ENCODE measurements at regions of chr5 and their contacts with region 1.

Region 1: DNA sequence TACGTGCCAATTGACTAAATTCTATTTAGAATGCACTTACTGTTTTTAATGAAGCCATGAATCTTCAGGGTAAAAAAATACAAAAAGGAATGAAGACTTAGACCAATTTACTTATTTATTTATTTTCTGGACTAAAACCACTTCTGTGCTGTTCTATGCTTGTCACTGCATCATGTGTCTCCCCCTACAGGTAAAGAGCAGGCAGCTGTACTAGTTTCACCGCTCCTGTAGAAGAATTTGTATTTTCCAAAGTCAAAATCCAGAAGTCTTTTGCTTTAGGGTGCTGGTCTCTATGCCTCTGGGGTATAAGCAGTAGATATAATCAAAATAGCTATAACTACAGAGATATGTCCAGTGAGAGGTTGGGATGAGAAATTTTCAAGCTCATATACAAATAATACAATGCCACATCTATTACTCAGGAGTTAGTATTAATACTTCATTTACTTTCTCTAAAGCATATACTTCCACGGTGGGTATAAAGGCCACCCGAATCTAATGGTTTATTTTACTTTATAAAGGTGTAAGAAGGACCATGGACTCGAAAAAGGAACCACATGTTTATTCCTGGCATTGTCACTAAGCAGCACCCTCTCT is 591.5 kb downstream of the RAB3C start:
- DNase-seq: no peak
- H3K4me3 ChIP-seq: no peak overlapping the region
- H3K27me3 ChIP-seq: no peaks in the 10 kb centered on the region
- CTCF ChIP-seq: peak; percentile 89

Region 2: GRCh38 chr5:59034498-59035186 is 139.7 kb before region 1 on chr5:
- CTCF ChIA-PET with region 1: interaction called, 84 read pairs
- POLR2A ChIA-PET with region 1: no interaction called
- DNase-seq: no peak
- H3K4me3 ChIP-seq: no peak overlapping the region
- H3K27me3 ChIP-seq: no peaks in the 10 kb centered on the region
- CTCF ChIP-seq: peak; percentile 81

Region 3: DNA sequence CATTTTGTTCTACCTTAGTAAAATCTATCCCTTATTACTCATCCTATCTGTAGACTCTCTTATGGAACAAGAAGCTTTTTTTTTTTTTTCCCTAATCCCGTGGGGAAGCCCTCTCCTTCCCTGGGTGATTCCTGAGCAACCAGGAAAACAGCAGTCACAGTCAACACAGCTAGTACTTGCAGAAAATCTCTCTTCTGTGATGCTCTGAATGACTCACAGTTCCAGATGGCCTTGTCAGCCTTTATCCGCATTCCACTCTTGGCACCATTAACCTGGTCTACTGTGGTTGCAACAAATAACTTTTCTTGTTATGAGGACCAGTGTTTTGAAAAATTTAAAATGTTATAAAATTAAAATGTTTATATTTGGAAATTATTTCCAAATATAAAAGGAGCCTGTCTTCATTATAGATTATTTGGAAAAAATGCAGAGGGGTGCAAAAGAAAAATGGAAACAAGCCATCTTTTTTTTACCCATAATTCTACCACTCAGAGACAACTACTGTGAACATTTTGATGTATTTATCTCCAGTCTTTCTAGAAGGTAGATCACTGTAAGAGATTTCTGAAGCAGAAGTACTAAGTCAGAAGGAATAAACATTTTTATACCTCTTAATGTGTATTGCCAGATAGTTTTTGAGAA is 104.8 kb before region 1 on chr5:
- CTCF ChIA-PET with region 1: no interaction called
- POLR2A ChIA-PET with region 1: no interaction called
- DNase-seq: peak; percentile 79
- H3K4me3 ChIP-seq: no peak overlapping the region
- H3K27me3 ChIP-seq: no peaks in the 10 kb centered on the region
- CTCF ChIP-seq: no peak

Region 4: DNA sequence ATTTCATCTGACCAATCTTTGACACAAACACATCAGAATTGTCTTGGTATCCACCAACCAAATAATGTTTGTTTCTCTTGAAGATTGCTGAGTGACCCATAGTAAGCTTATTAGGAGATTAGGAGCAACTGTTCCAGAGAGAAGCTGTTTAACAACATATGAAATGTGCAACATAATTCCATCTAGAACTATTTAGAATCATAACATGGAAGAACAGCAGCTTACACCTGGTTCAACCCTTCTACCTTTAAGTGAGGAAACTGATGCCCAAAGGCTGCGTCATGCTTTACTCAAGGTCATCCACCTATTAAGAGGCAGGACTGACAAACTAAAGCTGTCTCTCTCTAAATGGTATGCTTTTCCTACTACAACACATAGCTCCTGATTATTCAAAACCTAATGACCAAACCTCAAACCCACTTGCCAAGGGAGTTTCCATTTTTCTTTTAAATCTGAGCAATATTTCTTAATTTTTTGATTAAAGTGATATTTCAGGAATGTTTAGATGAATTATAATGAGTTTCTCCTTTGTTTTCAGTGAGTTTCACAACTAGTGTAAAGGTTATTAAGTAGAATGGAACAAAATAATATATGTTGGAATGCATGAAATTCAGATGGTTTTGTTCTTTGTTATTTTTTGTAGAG is 45.6 kb before region 1 on chr5:
- CTCF ChIA-PET with region 1: interaction called, 10 read pairs
- POLR2A ChIA-PET with region 1: no interaction called
- DNase-seq: no peak
- H3K4me3 ChIP-seq: no peak overlapping the region
- H3K27me3 ChIP-seq: no peaks in the 10 kb centered on the region
- CTCF ChIP-seq: no peak

Region 5: DNA sequence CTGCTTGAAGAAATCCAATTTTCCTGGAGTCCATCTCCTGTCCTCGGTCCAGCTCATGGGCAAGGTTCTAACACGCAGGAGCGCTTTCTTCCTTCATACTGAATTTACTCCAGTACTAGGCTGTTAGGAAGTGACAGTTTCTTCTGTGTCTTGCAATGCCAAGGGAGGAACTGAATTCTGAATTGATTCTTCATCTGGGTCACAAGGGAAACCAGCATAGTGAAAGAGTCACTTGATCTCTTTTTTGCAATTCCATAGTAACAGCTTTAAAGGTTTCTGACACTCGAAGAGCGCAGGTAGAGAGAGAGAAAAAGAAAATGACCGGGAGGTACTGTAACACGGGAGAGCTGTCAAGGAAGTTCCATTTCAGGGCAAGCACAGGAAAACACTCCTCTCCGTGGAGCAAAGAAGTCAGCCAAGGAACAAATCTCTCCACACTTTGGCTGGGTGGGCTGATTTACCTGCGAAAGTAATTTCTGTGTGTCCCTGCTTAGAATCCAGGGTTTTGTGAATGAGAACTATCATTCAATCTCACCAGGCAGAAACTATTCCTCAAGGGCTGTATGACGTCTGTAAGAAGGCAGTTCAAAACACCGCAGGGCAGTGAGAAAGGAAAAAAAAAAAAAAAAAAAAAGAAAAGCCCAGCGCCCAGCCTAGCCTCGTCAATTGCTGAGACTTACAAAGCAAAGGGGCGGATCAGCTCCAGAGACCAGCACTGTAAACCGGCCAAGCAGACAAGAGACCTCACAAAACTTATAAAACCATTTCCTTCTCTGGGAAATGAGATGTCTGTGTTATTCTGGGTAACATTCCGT is 101.4 kb after region 1 on chr5:
- CTCF ChIA-PET with region 1: no interaction called
- POLR2A ChIA-PET with region 1: interaction called, 15 read pairs
- DNase-seq: no peak
- H3K4me3 ChIP-seq: 0 out of 2 replicates have a peak overlapping the region, but pooled peaks have one; percentile 2
- H3K27me3 ChIP-seq: peaks cover 1% of the 10 kb centered on the region; the same call in 1 of the 2 replicates
- CTCF ChIP-seq: no peak

Region 6: DNA sequence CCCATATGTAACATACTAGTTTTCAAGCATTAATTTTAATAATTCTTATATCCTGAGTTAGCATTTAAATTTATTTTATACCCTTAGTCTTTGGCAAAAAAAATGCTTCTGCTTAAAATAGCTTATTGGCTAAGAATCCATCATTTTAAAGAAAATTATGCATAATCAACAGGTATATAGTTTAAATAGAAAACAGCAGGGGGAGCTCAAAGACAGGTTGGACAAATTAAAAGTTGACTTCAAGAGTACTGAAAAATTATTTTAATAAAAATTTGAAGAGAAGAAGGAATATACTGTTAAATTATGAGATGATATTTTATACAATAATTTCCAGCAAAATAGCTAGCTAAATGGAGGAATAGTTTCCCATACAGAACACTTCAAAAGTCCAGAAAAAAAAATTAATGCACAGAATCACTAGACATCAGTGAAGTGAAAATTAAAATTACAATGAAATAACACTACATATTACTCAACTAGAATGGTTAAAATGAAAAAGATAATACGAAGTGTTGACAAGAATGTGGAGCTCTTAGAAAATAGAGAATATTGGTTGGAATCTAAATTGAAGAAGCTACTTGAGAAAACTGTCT is 332.0 kb after region 1 on chr5:
- CTCF ChIA-PET with region 1: no interaction called
- POLR2A ChIA-PET with region 1: no interaction called
- DNase-seq: no peak
- H3K4me3 ChIP-seq: no peak overlapping the region
- H3K27me3 ChIP-seq: no peaks in the 10 kb centered on the region
- CTCF ChIP-seq: peak; percentile 26; the same call in 1 of the 2 replicates